ENCODE measurements at regions of chr14 and their contacts with region 1.

Region 1: DNA sequence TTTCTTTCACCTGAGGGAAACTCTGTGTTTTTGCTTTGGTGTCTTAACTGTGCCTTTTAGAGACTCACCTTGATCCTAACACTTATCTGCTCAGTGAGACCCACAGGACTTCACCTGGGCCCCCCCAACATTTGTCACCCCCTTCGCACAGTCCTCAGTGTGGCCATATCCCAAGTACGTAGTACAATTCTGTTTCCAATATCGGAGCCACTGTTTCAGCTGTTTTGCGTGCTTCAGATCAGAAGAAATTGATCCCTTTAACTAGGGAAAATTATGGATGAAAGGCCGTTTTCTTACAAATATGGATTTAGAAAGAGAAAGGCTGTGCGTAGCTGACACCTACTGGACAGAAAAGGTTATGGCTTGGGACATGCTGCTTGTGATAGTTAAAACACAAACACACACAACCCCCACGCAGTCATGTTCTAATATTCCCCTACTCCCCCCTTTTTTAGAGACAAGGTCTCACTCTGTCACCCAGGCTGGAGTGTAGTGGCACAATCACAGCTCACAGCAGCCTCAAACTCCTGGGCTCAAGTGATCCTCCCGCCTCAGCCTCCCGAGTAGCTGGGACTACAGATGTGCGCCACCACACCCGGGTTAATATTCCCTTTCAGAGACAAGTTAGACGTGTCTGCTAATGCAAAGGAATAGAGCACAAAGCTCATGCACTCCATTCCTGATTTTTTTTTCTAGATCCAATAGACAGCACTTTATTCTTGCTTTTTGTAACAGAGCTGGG is 3.6 kb upstream of the SLC7A8 start:
- DNase-seq: peak; percentile 68
- CTCF ChIP-seq: peak; percentile 69

Region 2: GRCh38 chr14:23120541-23121251 is 66.4 kb before region 1 on chr14:
- in situ Hi-C with region 1: loop called (anchors 10 kb)
- DNase-seq: peak; percentile 92
- CTCF ChIP-seq: peak; percentile 100

Region 3: DNA sequence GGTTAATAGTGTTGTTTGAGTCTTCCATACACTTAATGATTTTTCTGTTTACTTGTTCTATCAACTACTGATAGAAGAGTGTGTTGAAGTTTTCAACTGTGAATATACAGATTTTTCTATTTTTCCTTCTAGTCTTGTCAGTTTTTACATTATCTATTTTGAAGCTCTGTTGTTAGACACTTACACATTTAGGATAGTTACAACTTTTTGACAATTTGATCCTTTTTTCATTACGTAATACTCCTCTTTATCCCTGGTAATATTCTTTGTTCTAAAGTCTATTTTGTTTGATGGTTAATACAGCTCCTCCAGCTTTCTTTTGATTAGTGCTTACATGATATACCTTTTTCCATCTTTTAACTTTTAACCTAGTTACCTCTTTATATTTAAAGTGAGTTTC is 494.3 kb after region 1 on chr14:
- in situ Hi-C with region 1: no loop called
- DNase-seq: no peak
- CTCF ChIP-seq: no peak

Measured in GM13977 (cell line).